ENCODE measurements at regions of chr2 and their contacts with region 1.

Region 1: DNA sequence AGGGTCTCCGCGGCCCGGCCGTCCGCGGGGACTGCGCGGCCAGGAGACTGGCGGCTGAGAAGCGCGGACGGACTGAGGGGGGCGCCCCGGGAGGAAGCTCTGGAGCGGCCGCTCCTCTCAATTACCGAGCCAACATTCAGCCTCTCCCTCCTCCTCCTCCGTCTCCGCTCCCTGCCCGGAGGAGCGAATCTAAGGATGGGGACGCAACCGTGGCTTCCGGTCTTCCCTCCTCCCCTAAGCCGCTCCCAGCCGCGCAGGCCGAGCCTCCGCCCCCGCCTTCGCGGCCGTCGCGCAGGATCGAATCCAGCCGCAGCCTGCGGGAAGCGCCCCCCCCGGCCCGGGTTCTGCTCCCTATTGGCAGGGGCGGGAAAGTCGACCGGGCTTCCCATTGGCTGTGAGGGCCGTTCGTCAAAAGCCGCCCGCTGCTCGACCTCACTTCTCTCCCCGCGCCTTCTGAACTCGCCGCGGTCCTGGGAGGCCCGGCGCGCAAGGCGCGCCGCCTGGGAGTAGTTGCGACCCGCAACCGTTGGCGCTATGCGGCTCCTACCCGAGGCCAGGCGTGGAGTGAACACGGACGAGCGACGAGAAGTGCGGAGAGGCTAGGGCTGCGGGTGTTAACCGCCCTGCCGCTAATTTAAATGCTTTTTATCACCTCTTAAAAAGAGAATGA is at the start of gene HNRNPLL:
- DNase-seq: peak; percentile 99
- ATAC-seq: peak; percentile 87
- H3K4me3 Mint-ChIP-seq: peak within 1 kb of the TSS; percentile 76
- H3K27ac Mint-ChIP-seq: peak within 1 kb of the TSS; percentile 94
- H3K4me1 Mint-ChIP-seq: peaks cover 48% of the 10 kb centered on the region
- H3K27me3 Mint-ChIP-seq: no peaks in the 10 kb centered on the region
- total RNA-seq, gene HNRNPLL: 53.5 to 59.8 TPM

Region 2: DNA sequence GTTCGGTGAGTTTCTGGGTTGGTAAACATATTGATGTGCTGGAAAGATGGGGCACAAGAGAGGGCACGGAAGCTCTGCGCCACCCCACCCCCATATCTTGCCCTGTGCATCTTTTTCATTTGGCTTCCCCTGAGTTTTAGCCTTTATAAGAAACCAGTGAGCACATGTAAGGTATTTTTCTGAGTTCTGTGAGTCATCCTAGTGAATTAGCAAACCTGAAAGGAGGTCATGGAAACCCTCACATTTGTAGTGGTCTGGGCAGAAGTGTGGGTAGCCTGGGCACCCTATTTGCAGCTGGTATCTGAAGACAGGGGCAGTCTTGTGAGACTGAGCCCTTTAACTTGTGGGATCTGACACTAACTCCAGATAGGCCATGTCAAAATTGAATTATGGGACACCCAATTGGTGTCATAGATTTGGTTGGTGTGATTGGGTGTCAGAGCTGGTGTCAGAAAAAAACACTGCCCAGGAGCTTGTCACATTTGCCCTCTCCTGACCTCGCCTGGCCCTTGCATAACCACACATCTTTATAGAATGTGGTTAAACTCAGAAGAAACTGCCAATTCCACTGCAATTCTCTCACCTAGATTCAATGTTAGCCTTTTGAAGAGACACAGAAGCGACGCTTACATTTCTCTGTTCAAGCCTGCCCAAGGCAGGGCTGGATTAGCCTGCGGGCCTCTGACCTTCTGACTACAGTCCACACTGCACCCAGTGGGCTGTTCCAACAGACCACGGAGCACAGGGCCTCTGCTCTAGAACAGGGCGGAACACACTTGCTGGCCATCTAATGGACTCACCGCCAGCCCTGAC is 51.1 kb after region 1 on chr2:
- CTCF ChIA-PET with region 1: interaction called, 51 read pairs
- POLR2A ChIA-PET with region 1: interaction called, 5 read pairs
- intact Hi-C with region 1: loop called (anchors 1 kb)
- DNase-seq: peak; percentile 87
- ATAC-seq: peak; percentile 81
- H3K4me3 Mint-ChIP-seq: peak overlapping the region; percentile 44
- H3K27ac Mint-ChIP-seq: peak overlapping the region; percentile 98
- H3K4me1 Mint-ChIP-seq: peaks cover 58% of the 10 kb centered on the region
- H3K27me3 Mint-ChIP-seq: no peaks in the 10 kb centered on the region

Region 3: DNA sequence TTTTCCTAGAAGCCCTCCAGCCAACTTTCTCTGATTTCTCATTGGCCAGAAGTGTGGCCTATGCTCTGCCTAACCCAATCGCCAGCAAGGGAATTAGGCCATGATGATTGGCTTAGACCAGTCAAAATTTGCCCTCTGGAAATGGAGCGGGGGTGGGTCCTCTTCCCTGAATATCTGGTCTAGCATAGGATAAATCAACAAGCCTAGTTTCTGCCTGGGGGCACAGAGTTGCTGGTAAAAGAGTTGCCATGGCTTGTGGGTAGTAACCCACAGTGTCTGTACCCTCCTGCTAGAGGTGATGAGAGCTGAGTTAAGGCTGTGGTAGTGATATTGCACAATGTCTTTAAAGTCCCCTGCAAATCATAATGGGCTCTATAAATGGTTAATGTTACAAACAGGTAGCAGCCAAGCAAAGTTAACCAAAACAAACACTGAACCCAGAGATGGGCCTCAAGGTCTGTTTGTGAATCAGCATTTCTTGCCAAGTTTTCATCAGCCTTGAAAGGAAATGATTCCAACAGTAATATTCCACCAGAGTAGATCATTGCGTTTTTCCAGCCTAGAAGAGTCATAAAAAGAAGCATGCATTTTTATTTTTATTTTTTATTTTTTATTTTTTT is 82.4 kb after region 1 on chr2:
- CTCF ChIA-PET with region 1: interaction called, 27 read pairs
- POLR2A ChIA-PET with region 1: interaction called, 3 read pairs
- intact Hi-C with region 1: loop called in 1 of 2 experiments (anchors 1 kb)
- DNase-seq: no peak
- ATAC-seq: peak; percentile 52
- H3K4me3 Mint-ChIP-seq: no peak overlapping the region
- H3K27ac Mint-ChIP-seq: no peak overlapping the region
- H3K4me1 Mint-ChIP-seq: peaks cover 47% of the 10 kb centered on the region
- H3K27me3 Mint-ChIP-seq: no peaks in the 10 kb centered on the region

Region 4: DNA sequence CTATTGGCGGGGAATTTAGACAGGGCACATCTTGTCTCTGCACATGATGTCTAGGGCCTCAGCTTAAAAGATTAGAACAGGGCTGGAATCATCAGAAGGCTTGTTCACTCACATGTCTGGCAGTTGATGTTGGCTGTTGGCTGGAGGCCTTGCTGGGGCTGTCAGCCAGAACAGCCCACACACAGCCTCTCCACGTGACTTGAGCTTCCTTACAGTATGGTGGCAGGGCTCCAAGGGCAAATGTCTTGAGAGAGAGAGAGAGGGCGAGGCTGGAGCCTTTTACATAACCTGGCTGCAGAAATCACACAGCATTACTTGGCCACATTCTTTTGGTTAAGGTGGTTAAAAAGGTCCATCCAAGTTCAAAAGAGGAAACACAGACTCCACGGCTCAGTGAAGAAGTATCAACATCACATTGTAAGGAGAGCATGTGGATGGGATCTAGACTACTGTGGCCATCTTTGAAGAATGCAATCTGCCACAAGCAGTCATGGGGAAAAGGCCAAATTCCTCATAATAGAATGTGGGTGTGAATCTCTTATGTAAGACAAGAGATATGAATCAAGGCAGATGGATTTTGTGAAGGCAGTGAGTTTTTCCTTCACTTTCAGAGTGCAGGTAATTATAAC is 117.9 kb after region 1 on chr2:
- CTCF ChIA-PET with region 1: interaction called, 132 read pairs
- POLR2A ChIA-PET with region 1: no interaction called
- intact Hi-C with region 1: loop called (anchors 1 kb)
- DNase-seq: no peak
- ATAC-seq: no peak
- H3K4me3 Mint-ChIP-seq: peak overlapping the region; percentile 27
- H3K27ac Mint-ChIP-seq: peak overlapping the region; percentile 78
- H3K4me1 Mint-ChIP-seq: peaks cover 75% of the 10 kb centered on the region
- H3K27me3 Mint-ChIP-seq: no peaks in the 10 kb centered on the region

Region 5: GRCh38 chr2:38778687-38779082 is 175.8 kb after region 1 on chr2:
- CTCF ChIA-PET with region 1: no interaction called
- POLR2A ChIA-PET with region 1: no interaction called
- intact Hi-C with region 1: loop called in 1 of 2 experiments (anchors 1 kb)
- DNase-seq: no peak
- ATAC-seq: no peak
- H3K4me3 Mint-ChIP-seq: peak overlapping the region; percentile 97
- H3K27ac Mint-ChIP-seq: peak overlapping the region; percentile 95
- H3K4me1 Mint-ChIP-seq: peaks cover 7% of the 10 kb centered on the region
- H3K27me3 Mint-ChIP-seq: peaks cover 13% of the 10 kb centered on the region

Region 6: GRCh38 chr2:38997781-38998180 is 394.9 kb after region 1 on chr2:
- CTCF ChIA-PET with region 1: no interaction called
- POLR2A ChIA-PET with region 1: no interaction called
- intact Hi-C with region 1: no loop called
- DNase-seq: no peak
- ATAC-seq: no peak
- H3K4me3 Mint-ChIP-seq: no peak overlapping the region
- H3K27ac Mint-ChIP-seq: no peak overlapping the region
- H3K4me1 Mint-ChIP-seq: peaks cover under 1% of the 10 kb centered on the region
- H3K27me3 Mint-ChIP-seq: no peaks in the 10 kb centered on the region

Region 7: GRCh38 chr2:39260087-39260486 is 657.2 kb after region 1 on chr2:
- CTCF ChIA-PET with region 1: no interaction called
- POLR2A ChIA-PET with region 1: no interaction called
- intact Hi-C with region 1: no loop called
- DNase-seq: no peak
- ATAC-seq: no peak
- H3K4me3 Mint-ChIP-seq: no peak overlapping the region
- H3K27ac Mint-ChIP-seq: no peak overlapping the region
- H3K4me1 Mint-ChIP-seq: peaks cover 2% of the 10 kb centered on the region
- H3K27me3 Mint-ChIP-seq: no peaks in the 10 kb centered on the region

Region 8: DNA sequence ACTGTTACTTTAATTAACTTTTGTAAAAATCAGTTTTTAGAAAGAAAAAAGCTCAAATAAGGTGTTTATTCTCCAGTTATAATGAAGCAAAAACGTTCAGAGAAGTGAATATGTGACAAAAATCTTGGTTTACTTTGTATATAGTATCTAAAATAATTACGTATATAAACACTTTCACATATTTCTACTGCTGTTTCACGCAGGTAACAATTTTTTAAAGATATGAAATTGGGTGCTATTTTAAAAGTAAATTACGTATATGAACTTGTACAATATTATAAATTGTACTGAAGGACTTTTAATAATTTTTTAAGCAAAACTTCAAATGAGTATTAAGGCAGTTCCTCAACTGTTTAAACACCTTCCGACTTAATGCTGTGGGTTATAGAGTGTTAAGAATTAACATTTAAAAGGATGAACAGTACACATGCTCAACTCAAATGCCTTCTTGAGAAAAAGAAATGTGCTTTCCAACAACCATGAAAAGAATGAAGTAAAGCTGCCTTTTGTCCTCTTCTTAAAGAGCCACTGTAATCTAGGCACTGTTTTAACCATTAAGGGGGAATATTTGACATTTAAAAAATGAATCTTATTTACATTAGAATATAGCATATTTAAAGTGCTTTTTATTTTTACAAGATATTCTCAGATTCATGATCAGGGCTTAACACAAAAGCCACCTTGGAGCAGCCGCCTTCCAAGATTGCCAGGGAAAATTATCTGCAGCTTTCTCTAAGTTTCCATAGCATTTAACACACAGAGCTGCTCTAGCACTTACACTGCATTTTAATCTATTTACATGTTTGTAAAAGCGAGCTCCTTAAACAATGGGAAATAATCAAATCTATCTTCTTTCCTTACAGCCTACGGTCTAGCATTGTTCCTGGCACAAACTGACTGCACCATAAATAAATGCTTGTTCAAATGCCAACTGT is 697.4 kb after region 1 on chr2:
- CTCF ChIA-PET with region 1: no interaction called
- POLR2A ChIA-PET with region 1: no interaction called
- intact Hi-C with region 1: no loop called
- DNase-seq: no peak
- ATAC-seq: no peak
- H3K4me3 Mint-ChIP-seq: no peak overlapping the region
- H3K27ac Mint-ChIP-seq: no peak overlapping the region
- H3K4me1 Mint-ChIP-seq: no peaks in the 10 kb centered on the region
- H3K27me3 Mint-ChIP-seq: no peaks in the 10 kb centered on the region

Measured in activated CD4-positive, alpha-beta T cell treated with anti-CD3 and anti-CD28 coated beads for 36 hours (primary cell).